HepG2 (cell line): ENCODE measurements at regions of chr2 and their contacts with region 1.

Region 1: DNA sequence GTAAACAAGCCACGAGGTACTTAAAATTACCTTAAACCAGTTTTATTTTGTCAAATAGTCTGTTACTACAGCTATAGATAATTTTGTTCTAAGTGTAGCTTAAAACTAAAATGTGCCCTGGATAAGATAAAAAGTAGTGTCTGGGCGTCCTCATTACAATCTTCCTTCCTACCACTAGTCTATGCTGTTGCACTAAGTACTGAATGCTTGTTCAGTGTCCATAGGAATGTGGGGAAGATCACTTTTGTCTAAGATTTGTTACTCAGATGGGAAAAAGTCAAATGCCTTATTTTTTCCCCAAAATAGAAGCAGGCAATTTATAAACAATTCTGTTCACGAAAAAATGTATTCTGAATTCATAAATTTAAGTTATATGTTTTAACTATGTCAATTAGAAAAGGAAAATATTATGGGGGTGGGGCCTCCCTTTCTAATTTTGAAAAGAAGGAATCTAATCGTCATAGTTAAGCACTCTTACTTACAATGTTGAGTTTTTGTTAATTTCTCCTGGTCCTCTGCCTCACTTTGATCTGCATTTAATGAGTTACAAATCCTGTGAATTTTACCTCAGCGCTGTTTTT is 140.4 kb upstream of the VRK2 start:
- DNase-seq: peak; percentile 62
- ATAC-seq: peak; percentile 100
- H3K4me3 ChIP-seq: no peak overlapping the region
- H3K27ac ChIP-seq: no peak overlapping the region
- H3K4me1 ChIP-seq: no peaks in the 10 kb centered on the region
- H3K27me3 ChIP-seq: no peaks in the 10 kb centered on the region
- CTCF ChIP-seq: peak; percentile 86
- EP300 ChIP-seq: no peak
- POLR2A ChIP-seq: no peak
- RAD21 ChIP-seq: peak; percentile 87

Region 2: DNA sequence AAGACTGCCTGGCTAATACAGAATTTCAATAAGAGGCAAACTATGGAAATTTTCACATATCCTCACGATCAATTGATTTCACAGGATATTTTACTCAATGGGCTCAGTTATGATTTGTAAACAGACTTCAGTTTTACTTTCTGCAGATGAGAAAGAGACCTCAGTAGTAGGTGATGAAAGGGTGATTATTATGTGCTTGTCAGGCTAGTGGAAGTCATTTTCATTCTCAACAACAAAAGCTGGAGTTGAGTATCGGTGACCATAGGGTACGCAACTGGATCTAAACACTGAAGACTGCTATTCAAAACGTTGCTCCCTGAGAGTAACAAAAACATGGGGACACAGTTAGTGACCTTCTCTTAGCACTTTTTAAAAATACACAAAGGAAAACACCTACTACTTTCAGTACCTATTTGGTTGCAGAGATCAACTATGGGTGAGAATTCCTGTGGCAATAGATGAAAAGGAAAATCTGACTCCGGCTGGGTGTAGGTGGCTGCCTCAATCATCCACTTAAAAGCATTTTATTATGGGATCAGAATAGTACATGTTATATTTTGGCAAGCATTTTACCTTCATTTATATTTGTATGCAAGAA is 14.2 kb after region 1 on chr2:
- CTCF ChIA-PET with region 1: no interaction called
- POLR2A ChIA-PET with region 1: no interaction called
- in situ Hi-C with region 1: no loop called
- intact Hi-C with region 1: no loop called
- DNase-seq: no peak
- ATAC-seq: no peak
- H3K4me3 ChIP-seq: no peak overlapping the region
- H3K27ac ChIP-seq: no peak overlapping the region
- H3K4me1 ChIP-seq: no peaks in the 10 kb centered on the region
- H3K27me3 ChIP-seq: no peaks in the 10 kb centered on the region
- CTCF ChIP-seq: no peak
- EP300 ChIP-seq: no peak
- POLR2A ChIP-seq: no peak
- RAD21 ChIP-seq: no peak

Region 3: DNA sequence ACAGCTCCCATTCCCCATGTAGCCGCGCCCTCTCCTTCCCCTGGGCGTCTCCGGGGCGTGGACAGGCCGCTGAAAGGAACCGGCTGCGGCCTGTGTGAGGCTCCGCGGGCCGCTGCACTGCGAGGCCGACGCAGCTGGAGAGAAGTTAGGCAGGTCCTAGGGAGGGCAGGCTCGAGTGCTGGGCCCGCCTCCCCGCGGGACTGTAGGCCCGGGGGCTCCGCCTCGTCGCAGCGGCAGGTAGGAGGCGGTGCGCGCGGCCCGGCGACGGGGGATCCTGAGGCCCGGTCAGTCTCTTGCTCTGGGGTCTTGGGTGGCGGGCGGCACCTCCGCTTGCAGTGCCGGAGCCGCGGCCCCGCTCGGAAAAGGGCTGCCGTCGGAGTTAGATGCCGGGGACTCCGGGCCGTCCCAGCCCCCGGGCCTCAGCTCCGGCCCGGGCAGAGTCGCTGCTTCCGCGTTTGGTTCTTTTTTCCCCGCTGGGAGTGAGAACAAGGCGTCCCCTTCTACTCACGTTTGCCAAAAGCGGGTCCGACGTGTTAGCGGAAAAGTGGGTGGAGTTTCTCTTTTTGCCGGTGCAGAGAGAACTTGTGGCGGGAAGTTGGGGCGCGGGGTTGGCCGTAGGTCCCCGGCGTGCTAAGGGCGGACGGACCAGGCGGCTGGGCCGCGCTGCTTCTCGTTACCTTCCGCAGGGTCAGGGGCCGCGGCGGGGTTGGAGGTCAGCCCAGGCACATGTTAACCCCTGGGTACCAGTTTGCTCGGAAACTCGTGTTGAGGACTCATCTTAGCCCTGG is 140.5 kb after region 1 on chr2 and contains the start of gene VRK2:
- CTCF ChIA-PET with region 1: no interaction called
- POLR2A ChIA-PET with region 1: no interaction called
- in situ Hi-C with region 1: no loop called
- intact Hi-C with region 1: loop called (anchors 5 kb)
- DNase-seq: peak; percentile 91
- ATAC-seq: peak; percentile 97
- H3K4me3 ChIP-seq: peak within 1 kb of the TSS; percentile 59 to 76 (median 65)
- H3K27ac ChIP-seq: peak within 1 kb of the TSS; percentile 92
- H3K4me1 ChIP-seq: peaks cover 48% of the 10 kb centered on the region
- H3K27me3 ChIP-seq: no peaks in the 10 kb centered on the region; a peak in 1 of 5 replicates
- CTCF ChIP-seq: peak; percentile 52
- EP300 ChIP-seq: 0 out of 4 replicates have a peak, but pooled peaks have one; percentile 7 to 11
- POLR2A ChIP-seq: peak; percentile 86 to 91
- RAD21 ChIP-seq: peak; percentile 45
- total RNA-seq, gene VRK2: 29.1 and 41.1 TPM in 2 replicates

Region 4: DNA sequence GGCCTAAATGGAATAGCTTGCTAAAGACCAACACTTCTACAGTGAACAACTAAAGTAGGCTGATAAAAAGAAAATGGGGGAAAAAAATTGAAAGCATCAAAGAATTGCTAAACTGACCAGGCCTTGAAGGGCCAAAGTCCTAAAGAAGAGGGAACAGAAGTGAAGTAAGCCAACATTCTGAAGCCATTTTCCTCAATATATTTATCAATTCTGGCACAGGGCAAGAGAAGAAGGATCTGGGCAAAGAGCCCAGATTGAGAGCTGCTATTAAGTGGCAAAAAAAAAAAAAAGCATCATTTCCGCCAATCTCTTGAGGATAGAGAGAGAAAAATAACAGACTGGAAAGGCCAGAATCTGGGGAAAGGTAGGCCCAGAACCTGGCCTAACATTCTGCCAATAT is 309.2 kb after region 1 on chr2:
- CTCF ChIA-PET with region 1: interaction called, 7 read pairs
- POLR2A ChIA-PET with region 1: no interaction called
- in situ Hi-C with region 1: no loop called
- intact Hi-C with region 1: loop called (anchors 1 kb)
- DNase-seq: no peak
- ATAC-seq: no peak
- H3K4me3 ChIP-seq: no peak overlapping the region
- H3K27ac ChIP-seq: no peak overlapping the region
- H3K4me1 ChIP-seq: peaks cover 6% of the 10 kb centered on the region
- H3K27me3 ChIP-seq: no peaks in the 10 kb centered on the region
- CTCF ChIP-seq: no peak
- EP300 ChIP-seq: no peak
- POLR2A ChIP-seq: no peak
- RAD21 ChIP-seq: no peak

Region 5: DNA sequence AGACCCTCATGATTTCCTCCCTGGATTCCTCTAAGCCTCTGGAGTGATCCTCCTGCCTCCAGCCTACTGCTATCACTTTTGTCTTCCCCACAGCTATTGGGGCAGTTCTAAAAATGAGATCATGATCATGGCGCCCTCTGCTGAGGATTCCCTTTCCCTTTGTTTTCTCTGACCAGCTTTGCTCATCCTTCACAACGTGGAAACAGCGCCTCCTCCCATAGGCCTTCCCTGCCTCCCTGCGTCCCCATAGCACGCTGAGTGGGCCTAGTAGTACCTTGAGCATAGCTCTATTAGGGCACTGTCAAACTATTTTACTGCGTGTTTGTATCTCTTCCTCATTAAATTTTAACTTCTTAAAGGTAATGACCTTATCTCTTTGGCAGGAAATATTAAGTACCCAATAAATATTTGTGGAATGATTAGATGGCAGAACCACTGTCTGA is 541.8 kb after region 1 on chr2:
- CTCF ChIA-PET with region 1: interaction called, 43 read pairs
- POLR2A ChIA-PET with region 1: no interaction called
- in situ Hi-C with region 1: loop called (anchors 5 kb)
- intact Hi-C with region 1: loop called (anchors 1 kb)
- DNase-seq: peak; percentile 83
- ATAC-seq: peak; percentile 100
- H3K4me3 ChIP-seq: no peak overlapping the region
- H3K27ac ChIP-seq: no peak overlapping the region
- H3K4me1 ChIP-seq: no peaks in the 10 kb centered on the region
- H3K27me3 ChIP-seq: no peaks in the 10 kb centered on the region
- CTCF ChIP-seq: peak; percentile 97
- EP300 ChIP-seq: no peak
- POLR2A ChIP-seq: no peak
- RAD21 ChIP-seq: peak; percentile 88

Region 6: DNA sequence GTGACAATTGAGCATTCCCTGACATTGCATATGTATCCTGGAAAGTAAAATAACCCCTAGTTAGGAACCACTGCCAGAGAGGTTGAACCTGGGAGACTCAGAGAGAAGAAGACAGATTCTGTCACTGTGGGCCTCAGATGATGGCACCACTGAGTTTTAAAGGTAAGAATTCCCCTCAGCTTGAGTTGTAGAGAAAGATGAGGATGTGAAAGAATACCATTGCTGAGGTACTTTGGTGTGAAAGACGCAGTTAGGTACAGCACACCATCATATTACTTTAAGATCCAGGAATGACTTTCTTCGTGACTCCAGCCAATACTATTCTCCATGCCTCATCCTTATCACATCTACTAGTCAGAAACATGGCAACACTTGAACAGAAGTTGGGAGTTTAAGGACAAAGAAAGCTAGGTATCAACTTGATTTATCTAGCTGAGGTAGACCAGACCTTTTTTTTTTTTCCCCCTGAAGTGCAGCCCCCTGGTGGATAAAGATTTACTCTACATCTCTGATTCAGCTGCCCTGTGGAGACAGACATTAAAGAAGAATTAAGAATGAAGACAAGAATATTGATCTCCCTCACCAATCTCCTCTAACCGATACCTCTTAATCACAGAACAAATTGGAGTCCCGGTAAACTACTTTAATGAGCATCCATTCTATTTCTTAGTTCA is 965.4 kb after region 1 on chr2:
- CTCF ChIA-PET with region 1: no interaction called
- POLR2A ChIA-PET with region 1: no interaction called
- in situ Hi-C with region 1: no loop called
- intact Hi-C with region 1: loop called (anchors 2 kb)
- DNase-seq: no peak
- ATAC-seq: peak; percentile 38; the same call in 1 of the 3 replicates
- H3K4me3 ChIP-seq: no peak overlapping the region
- H3K27ac ChIP-seq: no peak overlapping the region
- H3K4me1 ChIP-seq: peaks cover 11% of the 10 kb centered on the region; the same call in 1 of the 2 replicates
- H3K27me3 ChIP-seq: no peaks in the 10 kb centered on the region
- CTCF ChIP-seq: no peak
- EP300 ChIP-seq: no peak
- POLR2A ChIP-seq: no peak
- RAD21 ChIP-seq: no peak